ENCODE measurements at regions of chr19 and their contacts with region 1.

Region 1: DNA sequence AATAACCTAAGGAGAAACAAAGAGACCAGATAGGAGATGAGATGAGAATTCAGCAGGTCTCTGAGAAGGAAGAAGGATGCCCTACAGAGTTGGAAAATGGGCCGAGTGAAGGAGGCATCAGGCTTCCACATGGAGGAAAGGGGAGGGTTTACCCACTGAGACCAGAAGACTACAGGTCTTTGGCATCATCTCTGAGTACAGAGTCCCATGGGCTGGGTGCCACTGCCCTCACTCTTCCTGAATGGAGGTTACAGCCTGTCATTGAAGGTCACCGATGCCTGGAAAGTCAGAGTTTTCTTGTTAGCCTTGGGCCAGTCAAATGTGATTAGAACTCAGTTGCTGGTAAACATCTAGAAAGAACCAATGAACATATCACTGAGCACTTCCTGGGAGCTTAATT is 9.9 kb downstream of the ZNF302 start:
- DNase-seq: no peak
- ATAC-seq: no peak
- H3K4me3 ChIP-seq: no peak overlapping the region
- H3K27ac ChIP-seq: no peak overlapping the region
- H3K4me1 ChIP-seq: no peaks in the 10 kb centered on the region
- H3K27me3 ChIP-seq: no peaks in the 10 kb centered on the region
- CTCF ChIP-seq: no peak
- POLR2A ChIP-seq: no peak
- RAD21 ChIP-seq: no peak

Region 2: DNA sequence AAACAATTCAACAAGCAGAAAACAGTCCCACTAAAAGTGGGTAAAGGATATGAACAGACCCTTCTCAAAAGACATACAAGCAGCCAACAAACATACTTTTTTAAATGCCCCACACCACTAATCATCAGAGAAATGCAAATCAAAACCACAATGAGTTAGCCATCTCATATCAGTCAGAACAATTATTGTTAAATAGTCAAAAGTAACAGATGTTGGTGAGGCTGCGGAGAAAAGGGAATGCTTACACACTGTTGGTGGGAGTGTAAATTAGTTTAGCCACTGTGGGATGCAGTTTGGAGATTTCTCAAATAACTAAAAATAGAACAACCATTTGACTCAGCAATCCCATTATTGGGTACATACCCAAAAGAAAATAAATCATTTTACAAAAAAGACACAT is 1877.0 kb after region 1 on chr19:
- CTCF ChIA-PET with region 1: no interaction called
- POLR2A ChIA-PET with region 1: interaction called, 11 read pairs
- dilution Hi-C with region 1: no loop called
- in situ Hi-C with region 1: no loop called
- intact Hi-C with region 1: no loop called
- DNase-seq: no peak
- ATAC-seq: no peak
- H3K4me3 ChIP-seq: no peak overlapping the region
- H3K27ac ChIP-seq: no peak overlapping the region
- H3K4me1 ChIP-seq: no peaks in the 10 kb centered on the region
- H3K27me3 ChIP-seq: no peaks in the 10 kb centered on the region
- CTCF ChIP-seq: no peak
- POLR2A ChIP-seq: no peak
- RAD21 ChIP-seq: no peak

Measured in IMR-90 (cell line).